PC-3 (cell line): ENCODE measurements at regions of chr10 and their contacts with region 1.

Region 1: GRCh38 chr10:61592581-61592980 is 70.1 kb upstream of the CABCOCO1 start:
- DNase-seq: peak; percentile 91
- ATAC-seq: peak; percentile 83
- H3K4me3 ChIP-seq: no peak overlapping the region
- H3K27ac ChIP-seq: no peak overlapping the region
- H3K4me1 ChIP-seq: peaks cover 18% of the 10 kb centered on the region
- H3K27me3 ChIP-seq: no peaks in the 10 kb centered on the region; the same call in 1 of the 2 replicates
- CTCF ChIP-seq: peak; percentile 100

Region 2: GRCh38 chr10:60816628-60817397 is 775.8 kb before region 1 on chr10:
- CTCF ChIA-PET with region 1: interaction called, 3 read pairs
- POLR2A ChIA-PET with region 1: no interaction called
- intact Hi-C with region 1: loop called (anchors 5 kb)
- DNase-seq: peak; percentile 97
- ATAC-seq: peak; percentile 93
- H3K4me3 ChIP-seq: no peak overlapping the region
- H3K27ac ChIP-seq: no peak overlapping the region
- H3K4me1 ChIP-seq: peaks cover 6% of the 10 kb centered on the region; the same call in 1 of the 2 replicates
- H3K27me3 ChIP-seq: no peaks in the 10 kb centered on the region
- CTCF ChIP-seq: peak; percentile 100

Region 3: DNA sequence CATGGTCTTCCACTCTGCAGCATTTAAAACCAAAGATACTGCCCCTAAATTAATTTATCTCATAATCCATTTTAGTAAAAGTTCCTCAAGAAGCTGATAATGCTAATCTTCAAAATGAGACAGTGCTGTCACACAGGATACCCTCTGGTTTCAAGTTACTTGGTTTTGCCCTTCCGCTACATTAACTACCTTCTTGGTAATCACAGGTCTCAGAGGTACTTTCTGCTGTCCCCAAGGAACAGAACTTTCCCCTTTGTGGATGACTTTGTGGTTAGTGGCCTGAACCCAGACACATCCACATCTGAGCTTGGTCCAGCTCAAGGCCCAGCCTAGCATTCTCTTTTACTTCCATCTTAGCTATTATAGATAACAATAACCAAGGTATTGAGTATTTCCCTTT is 50.6 kb before region 1 on chr10:
- CTCF ChIA-PET with region 1: no interaction called
- POLR2A ChIA-PET with region 1: no interaction called
- intact Hi-C with region 1: no loop called
- DNase-seq: no peak
- ATAC-seq: no peak
- H3K4me3 ChIP-seq: no peak overlapping the region
- H3K27ac ChIP-seq: no peak overlapping the region
- H3K4me1 ChIP-seq: no peaks in the 10 kb centered on the region
- H3K27me3 ChIP-seq: no peaks in the 10 kb centered on the region
- CTCF ChIP-seq: no peak